ENCODE measurements at regions of chr19 and their contacts with region 1.

Region 1: GRCh38 chr19:47143322-47144073 is 12.9 kb downstream of the SAE1 start:
- DNase-seq: no peak
- ATAC-seq: peak; percentile 29
- H3K4me3 Mint-ChIP-seq: no peak overlapping the region
- H3K27ac Mint-ChIP-seq: no peak overlapping the region
- H3K4me1 Mint-ChIP-seq: peaks cover 53% of the 10 kb centered on the region
- H3K27me3 Mint-ChIP-seq: no peaks in the 10 kb centered on the region
- CTCF ChIP-seq: no peak

Region 2: DNA sequence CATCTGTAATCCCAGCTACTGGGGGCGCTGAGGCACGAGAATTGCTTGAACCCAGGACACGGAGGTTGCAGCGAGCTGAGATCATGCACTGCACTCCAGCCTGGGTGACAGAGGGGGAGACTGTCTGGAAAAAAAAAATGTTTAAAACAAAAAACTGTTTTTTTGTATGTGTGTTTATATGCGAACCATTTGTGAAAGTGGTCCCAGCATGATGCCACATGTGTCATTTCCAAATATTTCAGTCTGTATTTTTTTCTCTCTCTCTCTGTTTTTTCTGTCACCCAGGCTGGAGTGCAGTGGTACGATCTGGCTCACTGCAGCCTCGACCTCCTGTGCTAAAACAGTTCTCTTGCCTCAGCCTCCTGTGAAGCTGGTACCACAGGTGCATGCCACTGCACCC is 24.6 kb after region 1 on chr19:
- CTCF ChIA-PET with region 1: no interaction called
- POLR2A ChIA-PET with region 1: no interaction called
- intact Hi-C with region 1: no loop called
- DNase-seq: no peak
- ATAC-seq: no peak
- H3K4me3 Mint-ChIP-seq: no peak overlapping the region
- H3K27ac Mint-ChIP-seq: no peak overlapping the region
- H3K4me1 Mint-ChIP-seq: peaks cover 10% of the 10 kb centered on the region
- H3K27me3 Mint-ChIP-seq: no peaks in the 10 kb centered on the region
- CTCF ChIP-seq: no peak

Region 3: DNA sequence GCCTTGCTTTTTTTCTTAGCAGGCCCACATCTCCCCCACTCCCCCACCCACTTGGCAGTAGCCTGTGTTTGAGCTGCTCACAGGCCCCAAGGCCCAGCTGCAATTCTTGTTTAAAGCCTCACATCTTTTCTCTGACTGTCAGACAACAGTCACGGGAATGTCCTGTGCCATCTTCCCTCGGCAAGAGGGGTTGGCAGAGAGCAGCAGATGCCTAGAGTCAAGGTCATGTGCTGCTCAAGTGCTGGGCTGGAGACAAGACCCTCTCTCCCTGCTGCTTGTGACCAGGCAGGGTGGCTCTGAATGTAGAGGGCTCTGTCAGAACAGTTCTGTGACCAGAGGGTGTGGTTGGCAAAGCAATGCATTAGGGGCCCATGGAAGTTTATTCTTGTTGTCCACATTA is 40.1 kb after region 1 on chr19:
- CTCF ChIA-PET with region 1: interaction called, 3 read pairs
- POLR2A ChIA-PET with region 1: interaction called, 7 read pairs
- intact Hi-C with region 1: loop called (anchors 5 kb)
- DNase-seq: no peak
- ATAC-seq: no peak
- H3K4me3 Mint-ChIP-seq: no peak overlapping the region
- H3K27ac Mint-ChIP-seq: peak overlapping the region; percentile 93
- H3K4me1 Mint-ChIP-seq: peaks cover 77% of the 10 kb centered on the region
- H3K27me3 Mint-ChIP-seq: no peaks in the 10 kb centered on the region
- CTCF ChIP-seq: no peak